Mammary epithelial cell (primary cell): ENCODE measurements at regions of chr13 and their contacts with region 1.

Region 1: GRCh38 chr13:46679369-46680120 is 117.4 kb downstream of the ESD start:
- DNase-seq: no peak
- H3K4me3 ChIP-seq: no peak overlapping the region
- H3K27ac ChIP-seq: no peak overlapping the region
- H3K4me1 ChIP-seq: no peaks in the 10 kb centered on the region
- H3K27me3 ChIP-seq: no peaks in the 10 kb centered on the region
- CTCF ChIP-seq: no peak

Region 2: DNA sequence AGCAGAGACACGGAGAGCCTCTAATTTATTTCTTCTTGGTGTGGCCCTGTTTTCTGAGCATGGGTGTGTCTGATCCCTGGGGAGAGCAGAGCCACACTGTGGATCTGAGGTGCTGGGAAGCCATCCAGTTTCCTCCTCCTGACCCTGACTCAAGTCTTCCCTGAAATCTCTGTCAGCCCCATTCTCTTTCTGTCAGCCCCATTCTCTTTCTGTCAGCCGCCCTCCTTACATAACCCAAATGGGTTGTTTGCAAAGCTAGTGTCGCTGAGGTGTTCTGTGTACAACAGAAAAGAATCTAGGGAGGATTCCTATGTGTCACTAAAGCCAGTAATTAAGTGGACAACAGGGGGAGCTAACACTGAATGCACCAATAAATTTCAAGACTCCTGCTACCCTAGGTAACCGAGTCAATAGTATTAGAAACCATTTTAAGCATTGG is 76.4 kb before region 1 on chr13:
- CTCF ChIA-PET with region 1: no interaction called
- dilution Hi-C with region 1: no loop called
- in situ Hi-C with region 1: no loop called
- intact Hi-C with region 1: loop called (anchors 5 kb)
- DNase-seq: no peak
- H3K4me3 ChIP-seq: no peak overlapping the region
- H3K27ac ChIP-seq: no peak overlapping the region
- H3K4me1 ChIP-seq: peaks cover 36% of the 10 kb centered on the region
- H3K27me3 ChIP-seq: no peaks in the 10 kb centered on the region
- CTCF ChIP-seq: peak; percentile 17 to 38

Region 3: GRCh38 chr13:46640843-46641242 is 38.7 kb before region 1 on chr13:
- CTCF ChIA-PET with region 1: no interaction called
- dilution Hi-C with region 1: loop called (anchors 5 kb)
- in situ Hi-C with region 1: no loop called
- intact Hi-C with region 1: no loop called
- DNase-seq: peak; percentile 78
- H3K4me3 ChIP-seq: no peak overlapping the region
- H3K27ac ChIP-seq: no peak overlapping the region
- H3K4me1 ChIP-seq: peaks cover 23% of the 10 kb centered on the region
- H3K27me3 ChIP-seq: no peaks in the 10 kb centered on the region
- CTCF ChIP-seq: no peak

Region 4: GRCh38 chr13:46698910-46699460 is 19.4 kb after region 1 on chr13:
- CTCF ChIA-PET with region 1: no interaction called
- dilution Hi-C with region 1: no loop called
- in situ Hi-C with region 1: no loop called
- intact Hi-C with region 1: no loop called
- DNase-seq: no peak
- H3K4me3 ChIP-seq: no peak overlapping the region
- H3K27ac ChIP-seq: no peak overlapping the region
- H3K4me1 ChIP-seq: no peaks in the 10 kb centered on the region
- H3K27me3 ChIP-seq: no peaks in the 10 kb centered on the region
- CTCF ChIP-seq: no peak